ENCODE measurements at regions of chr1 and their contacts with region 1.

Region 1: DNA sequence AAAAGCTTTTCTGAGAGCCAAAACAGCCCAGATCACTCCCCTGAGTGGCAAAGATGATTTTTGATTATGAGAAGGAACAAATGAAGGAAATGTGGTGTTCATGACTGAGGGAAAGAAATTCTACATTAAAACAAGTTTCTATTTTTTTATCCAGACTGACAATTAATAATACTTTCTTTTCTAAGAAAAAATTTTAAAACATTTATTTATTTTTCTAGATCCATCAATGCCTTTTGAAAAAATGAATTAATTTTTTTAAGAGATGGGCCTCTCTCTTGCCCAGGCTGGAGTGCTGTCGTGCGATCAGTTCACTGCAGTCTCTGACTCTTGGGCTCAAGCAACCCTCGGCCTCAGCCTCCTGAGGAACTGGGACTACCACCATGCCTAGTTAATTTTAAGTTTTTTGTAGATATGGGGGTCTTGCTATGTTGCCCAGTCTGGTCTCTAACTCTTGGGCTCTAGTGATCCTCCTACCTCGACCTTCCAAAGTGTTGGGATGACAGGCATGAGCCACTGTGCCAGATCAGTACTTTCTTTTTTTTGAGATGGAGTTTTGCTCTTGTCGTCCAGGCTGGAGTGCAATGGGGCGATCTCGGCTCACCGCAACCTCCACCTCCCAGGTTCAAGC is 11.2 kb upstream of the TXNIP start:
- DNase-seq: no peak
- ATAC-seq: no peak
- H3K4me3 ChIP-seq: no peak overlapping the region
- H3K4me3 Mint-ChIP-seq: peak overlapping the region; percentile 86
- H3K27ac ChIP-seq: no peak overlapping the region
- H3K27ac Mint-ChIP-seq: peak overlapping the region; percentile 86
- H3K4me1 ChIP-seq: peaks cover 47% of the 10 kb centered on the region
- H3K4me1 Mint-ChIP-seq: peaks cover 46% of the 10 kb centered on the region
- H3K27me3 ChIP-seq: no peaks in the 10 kb centered on the region
- H3K27me3 Mint-ChIP-seq: no peaks in the 10 kb centered on the region
- CTCF ChIP-seq: peak; percentile 5

Region 2: GRCh38 chr1:145740266-145740665 is 267.4 kb before region 1 on chr1:
- CTCF ChIA-PET with region 1: no interaction called
- POLR2A ChIA-PET with region 1: no interaction called
- intact Hi-C with region 1: no loop called
- DNase-seq: no peak
- ATAC-seq: no peak
- H3K4me3 ChIP-seq: no peak overlapping the region
- H3K4me3 Mint-ChIP-seq: no peak overlapping the region
- H3K27ac ChIP-seq: no peak overlapping the region
- H3K27ac Mint-ChIP-seq: no peak overlapping the region
- H3K4me1 ChIP-seq: no peaks in the 10 kb centered on the region
- H3K4me1 Mint-ChIP-seq: no peaks in the 10 kb centered on the region
- H3K27me3 ChIP-seq: no peaks in the 10 kb centered on the region
- H3K27me3 Mint-ChIP-seq: no peaks in the 10 kb centered on the region
- CTCF ChIP-seq: no peak

Region 3: DNA sequence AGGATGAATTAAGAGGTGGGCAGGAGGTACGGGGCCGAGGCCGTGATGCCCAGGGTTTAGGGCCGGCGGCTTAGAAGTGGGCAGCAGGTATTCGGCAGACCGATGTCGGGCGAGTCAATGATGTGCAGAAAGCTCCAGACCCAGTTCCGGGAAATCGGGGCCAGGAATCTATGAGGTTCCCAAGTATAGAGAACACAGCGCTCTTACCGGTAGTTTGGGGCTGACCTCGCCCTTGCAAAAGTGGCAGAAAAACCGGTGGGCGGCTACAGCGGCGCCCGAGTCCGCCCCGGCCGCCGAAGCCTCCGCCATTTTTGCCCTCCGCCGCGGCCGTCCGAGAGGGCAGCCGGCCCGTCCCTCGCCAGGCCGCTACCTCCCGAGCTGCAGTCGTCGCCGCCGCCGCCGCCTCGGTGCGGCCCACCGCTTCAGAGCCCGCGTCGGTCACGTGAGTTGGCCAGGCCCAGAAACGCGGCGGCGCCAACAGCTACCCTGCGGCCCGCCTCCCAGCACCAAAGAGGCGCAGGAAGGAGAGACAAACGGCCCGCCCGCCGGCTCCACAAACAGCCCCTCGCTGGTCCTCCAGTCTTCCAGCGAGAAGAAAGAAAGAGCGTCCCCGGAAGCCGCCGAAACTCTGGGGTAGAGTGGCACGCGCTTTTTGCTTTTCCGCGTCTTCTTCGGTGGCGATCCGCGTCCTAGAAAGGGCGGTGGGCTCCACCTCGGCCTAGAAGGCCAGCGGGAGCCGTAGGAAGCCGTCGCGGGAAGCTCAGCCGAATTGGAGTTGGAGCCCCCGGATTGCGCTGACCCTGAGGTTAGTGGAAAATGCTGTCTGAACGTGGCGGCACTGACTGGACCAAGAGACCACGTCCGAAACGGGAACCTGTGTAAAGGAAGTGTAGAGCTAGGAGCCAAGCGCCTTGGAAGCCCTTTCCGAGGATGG is 183.8 kb before region 1 on chr1 and contains the starts of genes POLR3C and RNF115:
- CTCF ChIA-PET with region 1: no interaction called
- POLR2A ChIA-PET with region 1: no interaction called
- intact Hi-C with region 1: no loop called
- DNase-seq: peak; percentile 75 to 95 (median 86)
- ATAC-seq: peak; percentile 96
- H3K4me3 ChIP-seq: peak within 1 kb of the TSS; percentile 74
- H3K4me3 Mint-ChIP-seq: peak within 1 kb of the TSS; percentile 96
- H3K27ac ChIP-seq: peak within 1 kb of the TSS; percentile 78 to 81
- H3K27ac Mint-ChIP-seq: peak within 1 kb of the TSS; percentile 91
- H3K4me1 ChIP-seq: peaks cover 12% of the 10 kb centered on the region
- H3K4me1 Mint-ChIP-seq: peaks cover 29% of the 10 kb centered on the region
- H3K27me3 ChIP-seq: no peaks in the 10 kb centered on the region
- H3K27me3 Mint-ChIP-seq: no peaks in the 10 kb centered on the region
- CTCF ChIP-seq: no peak
- total RNA-seq, gene POLR3C: 18.6 to 19.9 TPM
- total RNA-seq, gene RNF115: 11.4 to 11.9 TPM

Region 4: DNA sequence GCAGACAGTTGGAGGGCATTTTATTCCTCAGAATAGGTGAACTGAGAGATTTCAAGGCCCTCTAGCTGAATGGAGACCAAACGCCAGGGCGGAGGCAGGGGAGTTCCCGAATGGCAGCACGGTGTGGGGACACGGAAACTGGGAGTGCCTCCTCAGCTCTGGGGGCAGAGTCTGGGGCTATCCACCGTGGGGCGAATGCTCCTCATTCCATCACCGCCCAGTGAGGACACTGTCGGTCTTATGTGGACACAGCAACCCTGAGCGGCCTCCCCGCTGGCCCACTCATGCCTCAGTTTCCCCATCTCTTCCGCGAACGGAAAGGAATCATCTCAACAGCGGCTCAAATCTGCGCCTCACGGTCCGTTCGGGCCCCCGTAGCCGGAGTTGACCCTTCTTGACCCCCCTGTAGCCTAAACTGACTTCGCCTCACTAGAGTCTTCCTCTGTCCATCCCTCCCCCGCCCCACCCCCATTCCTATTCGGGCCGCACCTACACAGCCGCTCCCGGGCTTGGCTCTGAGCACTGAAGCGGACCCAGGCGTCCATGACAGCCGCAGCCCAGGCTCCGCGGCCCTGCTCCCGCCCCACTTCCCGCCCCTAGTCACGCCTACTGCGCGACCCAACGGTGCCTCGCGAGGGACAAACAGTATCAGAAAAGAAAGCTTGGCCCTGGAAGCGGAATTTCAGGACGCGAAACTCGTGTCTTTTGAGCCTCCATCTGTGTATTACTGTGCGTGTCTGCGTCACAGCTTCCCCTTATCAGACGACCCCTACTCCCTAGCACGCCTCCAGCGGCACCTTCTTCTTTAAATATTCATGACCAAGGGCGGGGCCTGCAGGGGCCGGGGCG is 89.3 kb before region 1 on chr1 and contains the start of gene PEX11B:
- CTCF ChIA-PET with region 1: no interaction called
- POLR2A ChIA-PET with region 1: interaction called, 4 read pairs
- intact Hi-C with region 1: loop called in 1 of 2 experiments (anchors 5 kb)
- DNase-seq: peak; percentile 87 to 96 (median 92)
- ATAC-seq: peak; percentile 90
- H3K4me3 ChIP-seq: peak within 1 kb of the TSS; percentile 87
- H3K4me3 Mint-ChIP-seq: peak within 1 kb of the TSS; percentile 94
- H3K27ac ChIP-seq: peak within 1 kb of the TSS; percentile 52 to 60
- H3K27ac Mint-ChIP-seq: peak within 1 kb of the TSS; percentile 92
- H3K4me1 ChIP-seq: peaks cover 31% of the 10 kb centered on the region
- H3K4me1 Mint-ChIP-seq: peaks cover 47% of the 10 kb centered on the region
- H3K27me3 ChIP-seq: no peaks in the 10 kb centered on the region
- H3K27me3 Mint-ChIP-seq: no peaks in the 10 kb centered on the region
- CTCF ChIP-seq: no peak
- total RNA-seq, gene PEX11B: 11.6 to 13.2 TPM

Region 5: GRCh38 chr1:145972580-145972979 is 35.0 kb before region 1 on chr1:
- CTCF ChIA-PET with region 1: interaction called, 151 read pairs
- POLR2A ChIA-PET with region 1: interaction called, 144 read pairs
- intact Hi-C with region 1: loop called (anchors 1 kb)
- DNase-seq: no peak
- ATAC-seq: no peak
- H3K4me3 ChIP-seq: no peak overlapping the region
- H3K4me3 Mint-ChIP-seq: no peak overlapping the region
- H3K27ac ChIP-seq: no peak overlapping the region
- H3K27ac Mint-ChIP-seq: no peak overlapping the region
- H3K4me1 ChIP-seq: peaks cover 9% of the 10 kb centered on the region
- H3K4me1 Mint-ChIP-seq: peaks cover 26% of the 10 kb centered on the region
- H3K27me3 ChIP-seq: no peaks in the 10 kb centered on the region
- H3K27me3 Mint-ChIP-seq: no peaks in the 10 kb centered on the region
- CTCF ChIP-seq: no peak

Region 6: DNA sequence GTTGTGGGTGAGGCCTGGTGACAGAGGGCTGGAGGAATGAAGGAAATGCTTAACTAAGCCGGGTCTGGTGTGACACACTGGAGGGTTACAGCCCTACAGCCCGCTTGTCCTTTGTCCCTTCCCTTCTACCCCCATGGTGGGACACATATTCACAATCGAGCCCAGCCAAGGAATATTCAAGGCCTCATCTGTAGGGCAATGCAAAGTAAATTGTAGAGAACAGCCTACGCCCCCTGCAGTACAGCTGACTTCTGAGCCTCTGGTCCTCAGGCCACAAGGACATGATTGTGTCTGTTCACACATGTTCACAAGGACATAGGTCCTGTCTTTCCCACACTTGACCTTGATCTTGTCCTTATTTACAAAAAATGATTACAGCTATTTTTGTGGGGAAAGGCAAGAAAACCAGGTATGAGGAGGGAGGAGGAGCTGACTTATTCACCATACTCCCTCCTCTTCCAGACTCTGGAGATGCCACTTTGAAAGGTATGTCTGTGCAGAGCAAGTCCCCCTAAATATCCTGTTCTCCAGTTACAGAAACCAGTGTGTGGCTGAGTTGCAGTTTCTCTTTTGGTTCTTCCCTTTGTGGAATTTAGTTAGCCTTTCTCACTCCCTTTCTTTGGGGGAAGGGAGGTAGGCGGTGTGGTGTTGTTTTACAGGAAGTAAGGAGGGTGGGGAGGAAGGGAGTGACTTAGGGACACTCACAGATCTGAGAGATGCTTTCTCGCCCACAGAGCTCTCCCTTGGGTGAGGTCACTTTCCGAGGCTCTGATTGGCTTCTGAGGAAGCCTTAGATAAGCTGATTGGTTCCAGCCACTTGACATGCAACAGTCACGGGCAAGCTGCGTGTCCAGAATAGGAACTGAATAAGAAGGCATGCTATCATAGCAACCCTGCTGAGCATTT is 28.5 kb before region 1 on chr1:
- CTCF ChIA-PET with region 1: interaction called, 151 read pairs
- POLR2A ChIA-PET with region 1: interaction called, 144 read pairs
- intact Hi-C with region 1: loop called (anchors 1 kb)
- DNase-seq: peak in 13 of 14 experiments; percentile 45 to 97 (median 66)
- ATAC-seq: peak; percentile 69
- H3K4me3 ChIP-seq: peak overlapping the region; percentile 45
- H3K4me3 Mint-ChIP-seq: no peak overlapping the region
- H3K27ac ChIP-seq: peak overlapping the region; percentile 93 to 94
- H3K27ac Mint-ChIP-seq: no peak overlapping the region
- H3K4me1 ChIP-seq: peaks cover 69% of the 10 kb centered on the region
- H3K4me1 Mint-ChIP-seq: peaks cover 6% of the 10 kb centered on the region
- H3K27me3 ChIP-seq: no peaks in the 10 kb centered on the region
- H3K27me3 Mint-ChIP-seq: no peaks in the 10 kb centered on the region
- CTCF ChIP-seq: peak; percentile 28

Region 7: DNA sequence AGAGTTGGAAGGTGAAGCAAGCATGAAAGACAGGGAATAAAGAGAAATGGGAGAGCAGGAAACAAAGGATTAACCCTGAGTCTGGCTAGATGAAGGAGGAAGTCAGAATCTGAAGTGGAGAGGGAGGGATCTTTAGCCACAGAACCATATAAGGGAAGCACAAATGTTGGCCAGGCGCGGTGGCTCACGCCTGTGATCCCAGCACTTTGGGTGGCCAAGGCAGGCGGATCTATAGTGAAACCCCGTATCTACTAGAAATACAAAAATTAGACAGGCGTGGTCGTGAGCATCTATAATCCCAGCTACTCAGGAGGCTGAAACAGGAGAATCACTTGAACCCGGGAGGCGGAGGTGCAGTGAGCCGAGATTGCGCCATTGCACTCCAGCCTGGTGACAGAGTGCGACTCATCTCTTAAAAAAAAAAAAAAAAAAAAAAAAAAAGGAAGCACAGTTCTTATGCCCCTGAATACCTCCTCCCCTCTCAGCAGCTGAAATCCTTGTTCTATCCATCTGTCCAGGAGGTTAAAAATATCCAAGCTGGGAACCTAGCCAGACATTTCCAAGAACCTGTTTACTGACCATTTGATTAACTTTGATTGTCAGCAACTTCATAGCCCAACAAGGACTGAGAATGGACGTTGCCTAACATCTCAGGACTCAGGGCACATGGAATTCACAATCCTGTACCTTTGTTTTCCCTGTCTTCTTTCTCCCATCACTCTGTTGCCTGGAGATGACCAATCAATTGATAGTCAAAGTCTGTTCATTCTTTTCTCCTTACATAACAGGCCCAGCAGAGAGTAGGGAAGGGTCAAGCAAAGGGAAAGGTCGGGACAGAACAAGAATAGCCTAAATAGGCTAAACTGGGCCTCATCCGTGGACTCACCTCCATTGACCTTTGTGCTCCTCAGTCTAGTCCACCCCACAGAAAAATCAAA is 21.8 kb before region 1 on chr1:
- CTCF ChIA-PET with region 1: interaction called, 151 read pairs
- POLR2A ChIA-PET with region 1: interaction called, 144 read pairs
- intact Hi-C with region 1: no loop called
- DNase-seq: peak in 2 of 14 experiments; percentile 37 to 42
- ATAC-seq: no peak
- H3K4me3 ChIP-seq: no peak overlapping the region
- H3K4me3 Mint-ChIP-seq: peak overlapping the region; percentile 35
- H3K27ac ChIP-seq: peak overlapping the region; percentile 42 to 45
- H3K27ac Mint-ChIP-seq: no peak overlapping the region
- H3K4me1 ChIP-seq: peaks cover 83% of the 10 kb centered on the region
- H3K4me1 Mint-ChIP-seq: peaks cover 25% of the 10 kb centered on the region
- H3K27me3 ChIP-seq: no peaks in the 10 kb centered on the region
- H3K27me3 Mint-ChIP-seq: no peaks in the 10 kb centered on the region
- CTCF ChIP-seq: no peak

Region 8: DNA sequence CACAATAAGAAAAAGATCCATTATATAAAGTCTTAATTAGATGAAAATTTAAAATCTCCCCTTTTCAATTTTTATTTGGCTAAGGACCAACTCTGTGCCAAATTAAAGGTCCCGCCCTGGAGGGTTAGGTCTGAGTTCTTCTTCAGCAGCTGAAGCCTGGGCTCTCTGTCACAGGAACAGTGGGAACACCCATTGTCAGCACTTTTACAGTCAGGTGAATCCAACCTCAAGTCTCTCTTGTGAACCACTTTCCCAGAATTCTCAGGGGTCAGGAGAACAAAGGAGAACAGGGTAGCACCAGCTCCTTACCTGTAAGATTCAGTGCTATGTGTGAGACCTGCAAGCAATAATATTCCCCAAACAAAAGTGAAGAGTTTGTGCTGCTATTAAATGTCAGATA is 39.0 kb after region 1 on chr1:
- CTCF ChIA-PET with region 1: no interaction called
- POLR2A ChIA-PET with region 1: no interaction called
- intact Hi-C with region 1: no loop called
- DNase-seq: no peak
- ATAC-seq: no peak
- H3K4me3 ChIP-seq: no peak overlapping the region
- H3K4me3 Mint-ChIP-seq: no peak overlapping the region
- H3K27ac ChIP-seq: no peak overlapping the region
- H3K27ac Mint-ChIP-seq: no peak overlapping the region
- H3K4me1 ChIP-seq: peaks cover 7% of the 10 kb centered on the region
- H3K4me1 Mint-ChIP-seq: peaks cover 21% of the 10 kb centered on the region
- H3K27me3 ChIP-seq: no peaks in the 10 kb centered on the region
- H3K27me3 Mint-ChIP-seq: no peaks in the 10 kb centered on the region
- CTCF ChIP-seq: no peak